Esophagus squamous epithelium (tissue), 5 donors: ENCODE measurements at regions of chr7 and their contacts with region 1.

Region 1: GRCh38 chr7:73522105-73522872 is at the start of gene BAZ1B:
- DNase-seq: peak; percentile 93
- H3K4me3 ChIP-seq: peak within 1 kb of the TSS; percentile 59 to 95 (median 85)
- H3K27ac ChIP-seq: peak within 1 kb of the TSS; percentile 92 to 99 (median 94)
- H3K4me1 ChIP-seq: peaks cover 21 to 60% (median 34%) of the 10 kb centered on the region in 3 donors
- H3K27me3 ChIP-seq: no peaks in the 10 kb centered on the region
- CTCF ChIP-seq: peak in 3 of 6 experiments; percentile 14 to 37 (median 30)
- POLR2A ChIP-seq: peak in 2 of 4 donors; percentile 56 to 73
- total RNA-seq, gene BAZ1B: 18.8 to 40.4 (median 27.4) TPM

Region 2: DNA sequence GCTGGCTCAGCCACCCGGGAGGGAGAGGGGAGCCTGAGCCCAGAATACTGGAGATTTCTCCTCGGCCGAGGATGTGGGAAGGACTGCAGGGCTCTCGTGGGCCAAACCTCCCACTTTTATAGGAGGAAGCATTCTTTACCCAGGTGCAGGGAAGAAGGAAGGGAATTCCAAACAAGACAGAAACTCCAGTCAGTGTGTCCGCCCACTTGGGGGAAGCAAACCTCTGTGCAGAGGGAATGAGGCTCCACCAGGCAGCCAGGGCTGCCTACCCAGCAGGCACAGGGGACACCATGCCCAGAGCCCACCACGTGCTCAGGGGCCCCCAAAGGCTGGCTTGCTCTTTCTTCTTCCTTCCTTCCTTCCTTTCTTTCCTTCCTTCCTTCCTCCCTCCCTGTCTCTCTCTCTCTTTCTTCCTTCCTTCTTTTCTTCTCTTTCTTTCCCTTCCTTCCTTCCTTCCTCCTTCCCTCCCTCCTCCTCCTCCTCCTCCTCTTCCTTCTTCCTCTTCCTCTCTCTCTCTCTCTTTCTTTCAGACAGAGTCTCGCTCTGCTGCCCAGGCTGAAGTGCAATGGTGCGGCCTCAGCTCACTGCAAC is 104.1 kb before region 1 on chr7:
- intact Hi-C with region 1: no loop called
- DNase-seq: no peak
- H3K4me3 ChIP-seq: no peak overlapping the region
- H3K27ac ChIP-seq: no peak overlapping the region
- H3K4me1 ChIP-seq: no peaks in the 10 kb centered on the region
- H3K27me3 ChIP-seq: peaks cover 0 to under 1% (median 0%) of the 10 kb centered on the region in 4 donors
- CTCF ChIP-seq: no peak
- POLR2A ChIP-seq: no peak

Region 3: DNA sequence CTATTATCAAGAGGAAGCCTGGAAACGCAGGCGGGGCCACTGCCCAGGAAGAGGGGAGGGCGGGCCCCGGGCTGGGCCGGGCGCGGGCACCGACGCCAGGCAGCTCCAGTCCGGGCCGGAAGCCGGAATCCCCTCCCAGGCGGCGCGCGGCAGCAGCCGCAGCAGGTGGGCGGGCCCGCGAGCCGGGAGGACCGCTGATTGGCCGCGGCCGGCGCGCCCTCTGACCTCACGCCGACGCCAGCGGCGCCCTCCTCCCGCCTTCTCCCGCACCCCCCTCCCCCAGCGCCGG is 34.8 kb after region 1 on chr7:
- intact Hi-C with region 1: loop called (anchors 5 kb)
- DNase-seq: peak; percentile 74
- H3K4me3 ChIP-seq: peak overlapping the region; percentile 75 to 96 (median 87)
- H3K27ac ChIP-seq: peak overlapping the region; percentile 99 to 100 (median 100)
- H3K4me1 ChIP-seq: peaks cover 0 to 35% (median 18%) of the 10 kb centered on the region in 3 donors
- H3K27me3 ChIP-seq: no peaks in the 10 kb centered on the region
- CTCF ChIP-seq: no peak
- POLR2A ChIP-seq: peak in 1 of 4 donors; percentile 58

Region 4: DNA sequence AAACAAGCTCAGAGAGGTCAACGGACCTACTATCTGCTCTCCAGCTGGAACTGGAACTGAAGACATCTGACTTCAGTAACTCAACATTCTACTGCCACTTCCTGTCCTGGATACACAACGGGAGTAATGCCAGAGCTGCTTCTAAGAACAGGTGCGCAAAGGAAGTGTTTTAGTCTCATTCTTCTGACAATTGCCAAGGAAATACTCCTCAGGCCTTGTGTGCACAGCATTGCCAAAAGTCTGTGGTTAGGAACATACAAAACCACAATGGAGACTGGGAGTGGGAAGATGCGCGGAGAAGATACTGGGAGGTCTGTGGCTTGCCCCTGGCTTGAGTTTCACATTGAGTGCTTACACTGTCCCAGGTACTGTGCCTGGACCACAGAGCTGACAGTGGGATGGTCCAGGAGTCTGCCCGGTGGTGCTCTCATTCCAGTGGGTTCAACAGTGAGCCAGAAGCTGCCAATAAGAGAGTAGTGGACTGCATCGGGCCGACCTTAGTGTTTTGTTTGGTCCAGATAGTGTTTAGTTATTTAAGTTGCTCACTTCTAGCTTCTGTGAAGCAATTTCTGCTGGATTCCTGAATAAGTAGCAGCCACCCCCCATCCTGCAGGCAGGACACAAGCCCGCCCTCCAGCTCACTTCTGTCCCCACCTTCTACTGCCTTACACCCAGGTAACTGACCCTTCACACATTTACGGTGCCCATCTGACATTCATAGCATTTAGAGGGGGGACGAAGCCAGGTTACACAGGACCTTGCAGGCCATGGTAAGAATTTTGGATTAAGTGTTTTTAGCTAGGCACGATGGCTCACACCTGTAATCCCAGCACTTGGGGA is 45.8 kb after region 1 on chr7:
- intact Hi-C with region 1: no loop called
- DNase-seq: no peak
- H3K4me3 ChIP-seq: no peak overlapping the region
- H3K27ac ChIP-seq: no peak overlapping the region
- H3K4me1 ChIP-seq: peaks cover 0 to 8% (median 0%) of the 10 kb centered on the region in 3 donors
- H3K27me3 ChIP-seq: no peaks in the 10 kb centered on the region
- CTCF ChIP-seq: no peak
- POLR2A ChIP-seq: no peak